ENCODE measurements at regions of chr4 and their contacts with region 1.

Region 1: DNA sequence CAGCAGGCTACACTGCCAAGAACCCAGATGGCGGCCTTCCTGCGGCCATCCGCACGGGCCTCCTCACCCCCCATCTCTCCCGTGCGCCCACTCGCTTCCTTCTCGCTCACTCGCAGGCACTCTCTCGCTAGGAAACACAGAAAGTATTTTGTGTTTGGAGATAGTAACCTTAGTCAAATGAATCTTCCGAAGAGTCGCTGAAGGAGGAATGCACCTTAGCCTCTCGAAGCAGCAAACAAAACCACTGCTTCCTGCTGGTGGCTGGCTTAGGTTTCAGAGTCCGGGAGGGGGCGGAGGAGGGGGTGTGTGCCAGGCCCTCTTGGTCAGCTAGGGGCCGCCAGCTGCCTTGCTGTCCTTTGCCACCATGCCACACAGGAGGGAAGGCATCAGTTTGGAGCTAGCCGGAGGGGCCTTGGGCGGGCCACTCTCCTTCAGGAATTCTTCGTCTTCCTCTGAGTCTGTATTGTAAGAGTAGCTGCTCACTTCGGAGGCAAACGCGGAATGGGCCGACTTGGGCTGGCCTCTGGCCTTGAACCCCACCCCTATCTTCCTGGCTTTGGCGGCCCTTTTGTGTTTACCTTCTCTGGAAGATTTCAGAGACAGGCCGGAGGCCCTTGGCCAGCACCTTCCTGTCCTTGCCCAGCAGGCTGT is 73.2 kb upstream of the UCP1 start:
- DNase-seq: no peak
- ATAC-seq: no peak

Region 2: GRCh38 chr4:140851032-140851636 is 209.2 kb after region 1 on chr4:
- intact Hi-C with region 1: loop called in 1 of 2 experiments (anchors 10 kb)
- DNase-seq: peak in 1 of 2 donors; percentile 25
- ATAC-seq: peak; percentile 72

Measured in left colon (tissue), 2 donors.